ENCODE measurements at regions of chr5 and their contacts with region 1.

Region 1: GRCh38 chr5:123617561-123617960 is 105.6 kb downstream of the CSNK1G3 start:
- DNase-seq: no peak
- H3K4me3 ChIP-seq: no peak overlapping the region
- H3K27ac ChIP-seq: no peak overlapping the region
- H3K4me1 ChIP-seq: no peaks in the 10 kb centered on the region
- H3K27me3 ChIP-seq: no peaks in the 10 kb centered on the region
- CTCF ChIP-seq: no peak

Region 2: DNA sequence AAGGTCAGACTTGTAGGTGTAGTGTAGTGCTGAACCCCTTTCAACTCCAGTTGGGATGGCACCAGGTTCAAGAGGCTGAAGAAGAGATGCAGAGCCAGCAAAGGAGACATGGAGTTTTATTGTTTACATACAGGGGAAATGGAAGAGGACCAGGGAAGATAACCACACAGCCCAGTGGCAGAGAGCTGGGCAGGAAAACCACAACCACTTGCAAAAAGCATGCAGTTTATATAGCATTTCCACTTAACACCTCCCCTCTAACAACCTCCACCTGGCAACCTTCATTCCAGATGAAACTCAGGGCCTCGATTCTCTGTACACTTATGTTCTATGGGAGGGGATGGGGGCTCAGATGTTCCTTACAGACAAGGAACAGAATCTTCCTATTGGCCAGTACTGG is 715.3 kb before region 1 on chr5:
- CTCF ChIA-PET with region 1: no interaction called
- POLR2A ChIA-PET with region 1: no interaction called
- intact Hi-C with region 1: loop called (anchors 5 kb)
- DNase-seq: no peak
- H3K4me3 ChIP-seq: no peak overlapping the region
- H3K27ac ChIP-seq: no peak overlapping the region
- H3K4me1 ChIP-seq: no peaks in the 10 kb centered on the region
- H3K27me3 ChIP-seq: no peaks in the 10 kb centered on the region
- CTCF ChIP-seq: no peak